Esophagus muscularis mucosa (tissue), 4 donors: ENCODE measurements at regions of chr10 and their contacts with region 1.

Region 1: DNA sequence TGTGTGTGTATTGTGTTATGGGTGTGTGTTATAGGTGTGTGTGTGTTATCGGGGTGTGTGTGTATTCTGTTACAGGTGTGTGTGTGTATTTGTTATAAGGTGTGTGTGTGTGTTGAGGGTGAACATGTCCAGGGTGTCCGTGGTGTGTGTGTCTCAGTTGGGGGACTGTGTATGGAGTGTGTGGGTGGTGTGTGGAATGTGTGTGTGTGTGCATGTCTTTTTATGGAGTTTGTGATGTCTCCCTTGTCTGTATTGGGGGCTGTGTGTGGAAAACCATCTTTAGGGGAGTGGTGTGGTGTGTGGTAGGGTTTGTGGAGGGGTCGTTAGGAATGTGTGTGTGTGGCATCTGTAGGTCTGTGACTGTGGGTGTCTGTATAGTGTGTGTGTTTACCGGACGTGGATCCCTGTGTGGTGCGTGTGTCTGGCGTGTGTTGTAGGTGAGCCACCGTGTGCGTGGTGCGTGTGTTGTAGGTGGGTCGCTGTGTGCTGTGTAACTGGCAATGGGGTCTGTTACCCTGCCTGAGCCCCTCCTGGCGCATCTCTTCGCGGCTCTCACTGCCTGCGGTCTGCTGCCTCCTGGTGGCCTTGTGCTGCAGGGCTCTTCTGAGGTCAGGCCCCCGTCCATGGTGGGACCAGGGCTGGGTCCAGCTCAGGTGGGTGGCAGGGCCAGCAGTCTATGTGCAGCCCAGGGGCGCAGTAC is 61.7 kb downstream of the PALD1 start:
- DNase-seq: no peak
- H3K4me3 ChIP-seq: no peak overlapping the region
- H3K27ac ChIP-seq: no peak overlapping the region
- H3K4me1 ChIP-seq: peaks cover 0 to 21% (median 14%) of the 10 kb centered on the region in 4 donors
- H3K27me3 ChIP-seq: no peaks in the 10 kb centered on the region
- CTCF ChIP-seq: peak; percentile 77 to 84 (median 83)
- EP300 ChIP-seq: no peak
- POLR2A ChIP-seq: no peak

Region 2: DNA sequence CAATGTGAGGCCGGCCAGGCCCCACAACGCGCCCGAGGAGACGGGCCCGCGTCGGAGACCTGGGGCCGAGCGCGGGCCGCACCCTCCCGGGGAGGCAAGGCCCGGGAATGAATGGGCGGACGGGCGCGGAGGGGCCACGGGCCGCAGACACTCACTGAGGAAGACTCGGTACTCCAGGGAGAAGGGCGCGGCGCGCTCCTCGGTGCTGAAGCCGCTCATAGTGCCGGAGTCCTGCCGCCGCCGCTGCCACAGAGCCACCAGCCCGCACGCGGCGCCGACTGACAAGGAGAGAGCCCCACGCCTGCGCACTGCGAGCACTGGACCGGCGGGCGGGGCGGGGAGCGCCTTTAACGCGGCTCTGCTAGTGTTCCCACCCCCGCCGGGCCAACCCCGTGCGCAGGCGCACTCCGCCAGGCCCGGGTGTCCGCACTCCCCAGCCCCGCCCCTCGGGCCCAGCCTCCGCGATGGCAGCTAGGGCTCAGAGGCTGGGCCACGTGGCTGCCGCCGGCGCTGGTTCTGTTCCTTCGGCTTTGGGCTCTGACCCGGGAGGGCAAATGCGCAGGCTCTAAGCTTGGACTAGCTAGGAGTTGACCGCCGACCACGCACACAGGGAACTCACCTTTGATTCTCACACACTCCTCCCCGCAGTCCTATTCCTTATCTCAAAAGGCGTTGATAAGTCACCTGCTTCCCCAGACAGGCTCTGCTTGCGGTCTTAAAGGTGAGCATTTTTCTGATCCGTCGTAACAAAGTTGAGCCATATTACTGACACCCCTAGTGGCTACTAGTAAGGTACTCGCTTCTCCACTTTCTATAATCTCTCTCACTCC is 306.9 kb before region 1 on chr10 and contains the start of gene PPA1:
- intact Hi-C with region 1: loop called (anchors 10 kb)
- DNase-seq: peak; percentile 99
- H3K4me3 ChIP-seq: peak within 1 kb of the TSS; percentile 75 to 96 (median 88)
- H3K27ac ChIP-seq: peak within 1 kb of the TSS; percentile 81 to 84 (median 83)
- H3K4me1 ChIP-seq: peaks cover 24 to 36% (median 31%) of the 10 kb centered on the region in 4 donors
- H3K27me3 ChIP-seq: no peaks in the 10 kb centered on the region
- CTCF ChIP-seq: peak in 1 of 3 experiments; percentile 13
- EP300 ChIP-seq: no peak
- POLR2A ChIP-seq: peak; percentile 62
- total RNA-seq, gene PPA1: 72.6 to 105 (median 82.2) TPM

Region 3: DNA sequence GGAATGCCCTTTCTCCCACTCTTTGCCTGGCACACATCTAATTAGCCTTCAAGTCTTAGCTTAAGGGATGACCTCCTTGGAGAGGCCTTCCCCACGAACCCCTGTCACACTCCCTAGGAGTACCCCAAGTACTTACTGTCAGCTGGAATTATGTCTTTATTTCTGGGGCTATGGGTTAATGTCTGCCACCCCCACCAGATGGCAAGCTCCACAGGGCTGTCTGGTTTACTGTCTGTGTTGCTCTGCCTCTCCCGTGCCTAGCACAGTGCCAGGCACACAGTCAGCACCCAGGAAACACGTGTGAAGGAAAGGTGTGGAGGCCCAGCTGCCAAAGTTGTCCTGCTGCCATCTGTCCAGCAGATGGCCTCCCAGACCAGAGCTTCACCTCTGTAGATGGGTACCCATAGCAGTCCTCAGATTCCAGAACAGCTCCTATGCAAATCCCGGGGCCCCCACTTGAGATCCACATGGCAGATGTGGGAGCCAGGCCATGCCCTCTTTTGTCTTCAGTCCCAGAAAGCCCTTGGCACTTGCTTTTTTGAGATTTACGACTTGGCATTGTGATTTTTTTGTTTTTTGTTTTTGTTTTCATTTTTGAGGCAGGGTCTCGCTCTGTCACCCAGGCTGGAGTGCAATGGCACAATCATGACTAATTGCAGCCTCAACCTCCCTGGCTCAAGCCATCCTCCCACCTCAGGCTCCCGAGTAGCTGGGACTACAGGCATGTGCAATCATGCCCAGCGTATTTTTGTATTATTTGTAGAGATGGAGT is 78.8 kb before region 1 on chr10:
- intact Hi-C with region 1: loop called (anchors 1 kb)
- DNase-seq: no peak
- H3K4me3 ChIP-seq: no peak overlapping the region
- H3K27ac ChIP-seq: peak overlapping the region; percentile 31 to 87 (median 50)
- H3K4me1 ChIP-seq: peaks cover 39 to 57% (median 53%) of the 10 kb centered on the region in 4 donors
- H3K27me3 ChIP-seq: no peaks in the 10 kb centered on the region
- CTCF ChIP-seq: peak; percentile 80 to 92 (median 90)
- EP300 ChIP-seq: no peak
- POLR2A ChIP-seq: no peak